Activated CD8-positive, alpha-beta T cell treated with anti-CD3 and anti-CD28 coated beads for 36 hours (primary cell): ENCODE measurements at regions of chr14 and their contacts with region 1.

Region 1: DNA sequence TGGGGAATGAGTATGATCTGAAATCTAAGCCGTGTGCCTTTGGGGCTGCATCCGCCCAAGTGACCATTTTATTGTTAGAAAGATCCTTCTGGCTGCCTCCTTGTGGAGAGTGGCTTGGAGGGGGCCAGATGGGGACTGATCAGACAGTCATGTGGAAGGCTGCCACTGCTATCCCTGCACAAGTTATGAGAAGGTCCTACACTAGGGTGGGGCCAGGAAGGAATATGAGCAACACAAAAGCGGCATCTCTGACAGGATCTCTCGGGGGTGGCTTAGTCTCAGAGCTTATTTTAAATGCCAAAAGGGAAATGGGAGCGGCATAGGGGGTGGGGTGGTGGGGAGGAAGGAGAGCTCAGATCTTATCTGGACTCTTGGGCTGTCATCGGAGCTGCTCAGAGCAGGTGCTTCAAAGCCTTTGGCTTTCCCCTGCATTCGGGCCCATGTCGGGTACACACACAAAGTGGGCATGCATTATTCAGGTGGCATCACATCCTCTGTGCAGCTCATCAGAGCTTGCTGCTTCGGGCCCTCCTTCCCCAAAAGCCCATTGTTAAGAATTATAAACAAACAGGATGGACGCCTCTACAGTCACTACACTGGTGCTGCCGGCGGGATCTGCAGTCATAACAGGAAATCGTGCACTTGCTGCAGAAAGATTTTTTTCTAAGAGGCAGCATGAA is 805.4 kb downstream of the VRK1 start:
- DNase-seq: peak; percentile 76
- ATAC-seq: peak; percentile 84
- H3K4me3 Mint-ChIP-seq: no peak overlapping the region
- H3K27ac Mint-ChIP-seq: no peak overlapping the region
- H3K4me1 Mint-ChIP-seq: peaks cover 19% of the 10 kb centered on the region
- H3K27me3 Mint-ChIP-seq: no peaks in the 10 kb centered on the region
- CTCF ChIP-seq: no peak

Region 2: DNA sequence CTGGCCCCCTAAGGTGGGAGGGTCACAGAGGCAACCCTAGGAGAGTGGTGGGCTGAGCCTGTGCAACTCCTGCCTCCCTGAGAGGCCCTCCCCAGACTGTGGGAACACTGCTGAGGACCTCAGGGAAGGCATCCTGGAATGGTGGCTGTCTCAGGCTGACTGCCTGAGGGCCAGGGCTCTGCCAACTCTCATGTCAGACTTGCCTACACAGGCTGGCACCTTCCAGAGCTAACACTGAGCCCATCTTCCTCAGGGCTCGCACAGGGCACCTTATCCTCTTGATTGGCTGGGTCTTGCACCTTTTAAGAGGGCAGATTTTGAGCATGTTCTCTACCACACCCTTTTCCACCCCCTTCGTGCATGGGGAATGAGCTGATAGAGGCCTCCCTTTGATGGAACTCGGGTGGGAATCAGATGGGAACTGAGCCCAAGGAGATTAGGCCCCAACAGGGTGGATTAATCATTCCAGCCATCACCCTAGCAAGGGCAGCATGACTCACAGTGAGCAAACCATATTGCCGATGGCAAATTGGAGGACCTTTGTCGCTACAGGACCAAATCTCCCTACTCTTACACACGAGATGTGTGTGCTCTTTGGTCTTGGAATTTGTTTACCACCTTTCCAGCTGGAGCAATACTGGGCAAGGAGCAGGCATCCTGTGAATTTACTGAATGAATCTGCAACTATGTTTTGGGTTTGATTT is 102.6 kb before region 1 on chr14:
- CTCF ChIA-PET with region 1: no interaction called
- POLR2A ChIA-PET with region 1: no interaction called
- intact Hi-C with region 1: no loop called
- DNase-seq: no peak
- ATAC-seq: no peak
- H3K4me3 Mint-ChIP-seq: no peak overlapping the region
- H3K27ac Mint-ChIP-seq: no peak overlapping the region
- H3K4me1 Mint-ChIP-seq: no peaks in the 10 kb centered on the region
- H3K27me3 Mint-ChIP-seq: no peaks in the 10 kb centered on the region
- CTCF ChIP-seq: no peak

Region 3: DNA sequence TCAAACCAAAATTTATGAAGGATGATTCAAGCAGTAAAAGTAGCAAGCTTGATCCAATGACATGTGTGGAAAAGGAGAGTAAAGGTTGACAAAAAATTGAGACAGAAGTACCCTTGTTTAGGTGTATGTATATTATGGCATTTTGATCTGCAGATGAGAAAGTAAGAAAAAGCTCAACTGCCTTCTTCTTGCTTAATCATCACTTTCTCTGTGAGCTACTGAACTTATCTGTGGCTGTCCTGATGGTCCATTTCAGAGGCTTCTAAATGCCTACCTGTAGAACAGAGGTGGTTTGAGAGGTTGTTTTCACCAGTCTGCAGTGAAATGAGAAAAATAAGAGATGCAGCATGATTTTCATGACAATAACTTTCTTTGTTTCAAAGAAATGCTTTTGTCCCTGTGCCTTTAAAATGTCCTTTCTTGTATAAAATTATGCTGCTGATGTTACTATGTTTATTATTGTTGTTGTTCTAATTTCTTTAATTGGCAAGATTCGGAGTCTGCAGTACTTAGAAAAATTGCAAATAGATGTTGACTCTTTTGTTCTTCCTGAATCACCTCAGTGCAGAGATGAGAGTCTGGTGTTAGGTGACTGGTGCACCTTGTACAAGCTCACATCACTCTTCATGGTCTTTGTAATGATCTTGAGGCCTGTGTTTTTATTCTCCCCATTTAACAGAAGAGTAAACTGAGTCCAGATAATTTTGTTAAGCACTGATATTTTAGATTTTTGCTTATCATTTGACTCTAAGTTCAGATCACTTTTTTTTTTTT is 16.5 kb after region 1 on chr14:
- CTCF ChIA-PET with region 1: interaction called, 4 read pairs
- POLR2A ChIA-PET with region 1: interaction called, 8 read pairs
- intact Hi-C with region 1: loop called (anchors 2 kb)
- DNase-seq: no peak
- ATAC-seq: peak; percentile 62
- H3K4me3 Mint-ChIP-seq: peak overlapping the region; percentile 34
- H3K27ac Mint-ChIP-seq: peak overlapping the region; percentile 92
- H3K4me1 Mint-ChIP-seq: peaks cover 44% of the 10 kb centered on the region
- H3K27me3 Mint-ChIP-seq: no peaks in the 10 kb centered on the region
- CTCF ChIP-seq: no peak